ENCODE measurements at regions of chr9 and their contacts with region 1.

Region 1: DNA sequence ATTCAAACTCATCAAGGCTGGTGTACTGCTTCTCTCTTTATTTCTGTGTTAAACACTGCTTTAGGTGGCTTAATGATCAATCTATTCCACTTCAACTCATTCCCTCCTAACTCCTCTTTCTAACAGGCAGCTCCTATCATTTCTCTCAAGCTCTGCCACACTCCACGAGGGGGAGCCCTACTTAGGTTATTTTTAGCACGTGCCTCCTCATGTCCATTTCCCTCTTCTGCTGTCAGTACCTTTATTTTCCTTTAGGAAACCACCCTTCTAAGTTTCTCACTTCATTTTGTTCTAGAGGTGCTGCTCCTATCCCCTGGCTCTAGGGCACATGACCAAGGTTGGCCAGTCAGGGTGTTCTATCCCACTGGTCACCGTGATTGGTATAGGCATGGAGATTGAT is 6.7 kb upstream of the BRINP1 start:
- ATAC-seq: peak in 2 of 8 experiments; percentile 40 to 73
- H3K4me3 ChIP-seq: no peak overlapping the region
- H3K27ac ChIP-seq: no peak overlapping the region
- H3K4me1 ChIP-seq: peaks cover 0 to under 1% of the 10 kb centered on the region in 2 donors

Region 2: DNA sequence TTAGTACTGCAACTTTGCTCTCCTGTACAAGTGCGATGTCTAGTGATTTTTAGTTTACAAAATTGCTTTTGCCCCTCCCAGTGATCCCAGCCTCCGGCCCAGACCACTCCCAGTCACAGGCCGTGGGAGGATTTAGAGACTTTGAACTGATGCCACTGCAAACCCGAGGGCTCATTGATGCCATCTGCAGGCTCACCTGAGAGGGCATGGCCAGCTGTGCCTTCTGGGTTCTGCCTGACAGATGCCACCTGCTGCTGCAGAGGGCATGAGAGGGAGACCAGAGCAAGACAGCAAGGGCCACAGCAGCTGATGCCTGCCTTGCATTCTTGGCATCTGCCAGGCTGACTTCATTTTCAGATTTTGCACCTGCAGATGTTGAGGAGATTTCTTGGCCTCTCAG is 610.3 kb after region 1 on chr9:
- in situ Hi-C with region 1: loop called in 1 of 9 experiments (anchors 25 kb)
- ATAC-seq: no peak
- H3K4me3 ChIP-seq: no peak overlapping the region
- H3K27ac ChIP-seq: peak overlapping the region in 1 of 2 donors; percentile 23
- H3K4me1 ChIP-seq: peaks cover 5 to 10% of the 10 kb centered on the region in 2 donors